ENCODE measurements at regions of chr14 and their contacts with region 1.

Region 1: DNA sequence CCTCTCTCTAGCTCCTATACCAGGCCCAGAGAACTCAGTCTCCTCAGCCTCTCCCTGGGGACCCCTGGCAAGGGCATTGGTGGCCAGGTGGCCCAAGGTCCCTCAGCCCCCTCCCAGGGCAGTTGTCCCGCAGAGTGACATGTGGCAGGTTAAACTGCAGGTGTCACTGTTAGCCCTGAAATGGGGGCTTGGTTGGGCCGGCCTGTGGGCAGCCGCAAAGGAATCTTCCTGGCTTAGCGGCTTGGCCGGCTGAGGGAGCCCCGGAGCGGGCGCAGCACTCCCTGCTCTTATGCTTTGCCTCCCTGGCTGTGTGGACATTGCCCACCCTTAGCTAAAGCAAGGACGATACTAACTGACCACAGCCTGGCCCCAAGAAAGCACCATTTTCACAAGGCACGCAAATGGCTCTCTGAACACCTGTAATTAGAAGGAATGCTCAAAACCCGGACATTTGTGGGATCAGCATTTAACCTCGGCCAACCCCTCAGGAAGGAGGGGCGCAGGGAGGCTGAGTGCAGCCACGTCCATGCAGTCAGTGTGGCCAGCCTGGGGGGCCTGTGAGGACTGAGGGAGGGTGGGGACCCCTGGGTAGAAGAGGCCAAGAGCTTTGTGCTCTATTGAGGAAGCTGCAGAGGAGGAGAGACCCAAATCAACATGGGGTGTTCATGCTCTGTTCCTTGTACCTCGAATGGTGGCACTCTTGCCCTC is 82.2 kb downstream of the PAPOLA start:
- DNase-seq: peak; percentile 65
- ATAC-seq: peak; percentile 95
- H3K4me3 ChIP-seq: no peak overlapping the region
- H3K27ac ChIP-seq: no peak overlapping the region
- H3K4me1 ChIP-seq: 0 out of 2 replicates have a peak, but pooled peaks cover 4% of the 10 kb centered on the region
- H3K27me3 ChIP-seq: peaks cover 0 to 10% of the 10 kb centered on the region in 2 experiments; a peak in 3 of 5 replicates
- CTCF ChIP-seq: peak; percentile 93
- EP300 ChIP-seq: no peak
- POLR2A ChIP-seq: no peak
- RAD21 ChIP-seq: peak; percentile 99

Region 2: DNA sequence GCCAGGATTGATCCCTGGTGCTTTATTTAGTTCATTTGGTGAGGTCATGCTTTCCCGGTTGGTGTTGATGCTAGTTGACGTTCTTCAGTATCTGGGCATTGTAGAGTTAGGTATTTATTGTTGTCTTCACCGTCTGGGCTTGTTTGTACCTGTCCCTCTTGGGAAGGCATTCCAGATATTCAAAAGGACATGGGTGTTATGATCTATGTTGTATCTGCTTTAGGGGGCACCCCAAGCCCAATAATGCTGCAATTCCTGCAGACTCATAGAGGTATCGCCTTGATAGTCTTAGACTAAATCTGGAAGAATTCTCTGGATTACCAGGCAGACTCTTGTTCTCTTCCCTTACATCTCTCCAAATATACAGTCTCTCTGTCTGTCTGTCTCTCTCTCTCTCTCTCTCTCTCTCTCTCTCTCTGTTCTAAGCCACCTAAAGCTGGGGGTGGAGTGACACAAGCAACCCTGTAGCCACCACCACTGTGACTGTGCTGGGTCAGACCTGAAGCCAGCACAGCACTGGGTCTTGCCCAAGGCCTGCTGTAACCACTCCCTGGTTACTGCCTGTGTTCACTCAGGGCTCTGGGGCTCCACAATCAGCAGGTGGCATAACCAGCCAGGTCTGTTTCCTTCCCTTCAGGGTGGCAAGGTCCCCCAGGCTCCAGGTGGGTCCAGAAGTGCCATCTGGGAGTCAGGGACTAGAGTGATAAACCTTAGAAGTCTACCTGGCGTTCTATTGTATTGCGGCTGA is 150.1 kb before region 1 on chr14:
- CTCF ChIA-PET with region 1: no interaction called
- POLR2A ChIA-PET with region 1: no interaction called
- in situ Hi-C with region 1: no loop called
- intact Hi-C with region 1: no loop called
- DNase-seq: no peak
- ATAC-seq: no peak; the same call in 2 of the 3 replicates
- H3K4me3 ChIP-seq: no peak overlapping the region
- H3K27ac ChIP-seq: no peak overlapping the region
- H3K4me1 ChIP-seq: no peaks in the 10 kb centered on the region
- H3K27me3 ChIP-seq: no peaks in the 10 kb centered on the region; a peak in 1 of 5 replicates
- CTCF ChIP-seq: peak; percentile 51
- EP300 ChIP-seq: no peak
- POLR2A ChIP-seq: no peak
- RAD21 ChIP-seq: no peak

Region 3: GRCh38 chr14:96847297-96847850 is 263.0 kb after region 1 on chr14:
- CTCF ChIA-PET with region 1: interaction called, 14 read pairs
- POLR2A ChIA-PET with region 1: no interaction called
- in situ Hi-C with region 1: loop called (anchors 10 kb)
- intact Hi-C with region 1: loop called (anchors 5 kb)
- DNase-seq: no peak
- ATAC-seq: no peak
- H3K4me3 ChIP-seq: no peak overlapping the region
- H3K27ac ChIP-seq: no peak overlapping the region
- H3K4me1 ChIP-seq: peaks cover 8% of the 10 kb centered on the region; the same call in 1 of the 2 replicates
- H3K27me3 ChIP-seq: no peaks in the 10 kb centered on the region
- CTCF ChIP-seq: no peak
- EP300 ChIP-seq: no peak
- POLR2A ChIP-seq: no peak
- RAD21 ChIP-seq: no peak

Region 4: DNA sequence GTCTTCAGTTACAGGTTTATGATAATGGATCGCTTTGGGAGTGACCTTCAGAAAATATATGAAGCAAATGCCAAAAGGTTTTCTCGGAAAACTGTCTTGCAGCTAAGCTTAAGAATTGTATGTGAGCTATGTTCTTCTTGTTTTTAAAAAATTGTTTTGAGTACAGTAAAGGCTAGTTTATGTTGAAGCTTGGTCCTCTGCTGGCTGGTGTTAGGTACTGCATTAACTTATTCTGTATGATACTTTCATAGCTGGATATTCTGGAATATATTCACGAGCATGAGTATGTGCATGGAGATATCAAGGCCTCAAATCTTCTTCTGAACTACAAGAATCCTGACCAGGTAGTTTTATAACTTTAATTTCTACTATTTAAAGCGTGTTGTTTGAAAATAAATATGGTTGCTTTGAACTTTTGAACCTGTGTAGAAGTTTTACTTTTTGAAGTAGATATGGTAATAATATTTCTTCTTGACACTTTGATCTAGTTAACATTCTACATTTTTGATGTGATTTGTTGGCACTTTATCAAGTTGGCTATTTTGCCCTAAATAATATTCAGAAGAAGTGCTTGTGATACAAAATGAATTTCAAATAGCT is 268.6 kb after region 1 on chr14:
- CTCF ChIA-PET with region 1: interaction called, 14 read pairs
- POLR2A ChIA-PET with region 1: no interaction called
- in situ Hi-C with region 1: loop called (anchors 10 kb)
- intact Hi-C with region 1: loop called (anchors 5 kb)
- DNase-seq: peak; percentile 18
- ATAC-seq: peak; percentile 79
- H3K4me3 ChIP-seq: no peak overlapping the region
- H3K27ac ChIP-seq: no peak overlapping the region
- H3K4me1 ChIP-seq: peaks cover 8% of the 10 kb centered on the region; the same call in 1 of the 2 replicates
- H3K27me3 ChIP-seq: no peaks in the 10 kb centered on the region
- CTCF ChIP-seq: peak; percentile 51
- EP300 ChIP-seq: no peak
- POLR2A ChIP-seq: no peak
- RAD21 ChIP-seq: peak; percentile 33; the same call in 1 of the 2 replicates

Measured in HepG2 (cell line).